Activated CD4-positive, alpha-beta T cell treated with anti-CD3 and anti-CD28 coated beads for 36 hours (primary cell): ENCODE measurements at regions of chr13 and their contacts with region 1.

Region 1: DNA sequence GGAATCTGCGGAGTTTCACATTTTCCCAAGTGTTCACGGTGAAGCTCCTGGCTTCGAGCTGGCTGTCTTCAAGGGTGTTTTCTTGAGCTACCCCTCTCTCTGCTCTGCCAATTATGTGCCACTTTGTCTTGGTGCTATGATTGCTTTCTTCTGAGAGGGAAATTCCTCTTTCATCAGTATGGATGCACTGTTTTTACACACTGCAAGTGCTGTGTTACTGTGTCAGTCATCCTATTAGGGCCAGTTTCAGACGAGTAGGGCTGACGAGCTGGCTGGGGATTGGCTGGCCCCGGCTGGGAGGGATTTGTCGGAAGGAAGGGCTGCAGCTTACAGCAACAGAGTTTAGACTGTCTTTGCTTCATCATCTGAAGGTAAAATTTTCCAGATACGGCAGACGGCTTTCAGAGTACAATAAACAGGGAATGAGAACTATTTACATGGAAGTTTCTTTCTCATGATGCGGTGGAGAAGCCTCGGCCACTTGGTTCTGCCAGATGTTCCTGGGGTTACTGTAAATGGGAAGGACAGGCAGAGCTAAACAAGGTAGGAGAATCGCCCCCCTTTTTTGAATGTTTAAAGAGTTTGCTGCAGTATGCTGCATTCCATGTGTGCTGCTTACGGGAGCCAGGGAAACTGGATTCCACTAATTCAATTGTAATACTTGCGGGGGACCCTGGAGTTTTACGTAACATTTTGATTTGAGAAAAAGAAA is at the start of gene MBNL2:
- DNase-seq: peak; percentile 93
- ATAC-seq: peak; percentile 98
- H3K4me3 Mint-ChIP-seq: peak within 1 kb of the TSS; percentile 80
- H3K27ac Mint-ChIP-seq: peak within 1 kb of the TSS; percentile 95
- H3K4me1 Mint-ChIP-seq: peaks cover 31% of the 10 kb centered on the region
- H3K27me3 Mint-ChIP-seq: no peaks in the 10 kb centered on the region
- total RNA-seq, gene MBNL2: 16.7 to 24.5 TPM

Region 2: GRCh38 chr13:97257800-97258799 is 36.0 kb after region 1 on chr13:
- CTCF ChIA-PET with region 1: interaction called, 3 read pairs
- POLR2A ChIA-PET with region 1: interaction called, 9 read pairs
- intact Hi-C with region 1: loop called (anchors 1 to 2 kb)
- DNase-seq: peak; percentile 27
- ATAC-seq: peak; percentile 45
- H3K4me3 Mint-ChIP-seq: peak overlapping the region; percentile 7
- H3K27ac Mint-ChIP-seq: peak overlapping the region; percentile 76
- H3K4me1 Mint-ChIP-seq: peaks cover 78% of the 10 kb centered on the region
- H3K27me3 Mint-ChIP-seq: no peaks in the 10 kb centered on the region

Region 3: GRCh38 chr13:97344265-97345175 is 122.4 kb after region 1 on chr13:
- CTCF ChIA-PET with region 1: interaction called, 7 read pairs
- POLR2A ChIA-PET with region 1: no interaction called
- intact Hi-C with region 1: loop called (anchors 1 to 5 kb)
- DNase-seq: peak; percentile 73
- ATAC-seq: peak; percentile 80
- H3K4me3 Mint-ChIP-seq: no peak overlapping the region
- H3K27ac Mint-ChIP-seq: no peak overlapping the region
- H3K4me1 Mint-ChIP-seq: peaks cover 8% of the 10 kb centered on the region
- H3K27me3 Mint-ChIP-seq: no peaks in the 10 kb centered on the region

Region 4: DNA sequence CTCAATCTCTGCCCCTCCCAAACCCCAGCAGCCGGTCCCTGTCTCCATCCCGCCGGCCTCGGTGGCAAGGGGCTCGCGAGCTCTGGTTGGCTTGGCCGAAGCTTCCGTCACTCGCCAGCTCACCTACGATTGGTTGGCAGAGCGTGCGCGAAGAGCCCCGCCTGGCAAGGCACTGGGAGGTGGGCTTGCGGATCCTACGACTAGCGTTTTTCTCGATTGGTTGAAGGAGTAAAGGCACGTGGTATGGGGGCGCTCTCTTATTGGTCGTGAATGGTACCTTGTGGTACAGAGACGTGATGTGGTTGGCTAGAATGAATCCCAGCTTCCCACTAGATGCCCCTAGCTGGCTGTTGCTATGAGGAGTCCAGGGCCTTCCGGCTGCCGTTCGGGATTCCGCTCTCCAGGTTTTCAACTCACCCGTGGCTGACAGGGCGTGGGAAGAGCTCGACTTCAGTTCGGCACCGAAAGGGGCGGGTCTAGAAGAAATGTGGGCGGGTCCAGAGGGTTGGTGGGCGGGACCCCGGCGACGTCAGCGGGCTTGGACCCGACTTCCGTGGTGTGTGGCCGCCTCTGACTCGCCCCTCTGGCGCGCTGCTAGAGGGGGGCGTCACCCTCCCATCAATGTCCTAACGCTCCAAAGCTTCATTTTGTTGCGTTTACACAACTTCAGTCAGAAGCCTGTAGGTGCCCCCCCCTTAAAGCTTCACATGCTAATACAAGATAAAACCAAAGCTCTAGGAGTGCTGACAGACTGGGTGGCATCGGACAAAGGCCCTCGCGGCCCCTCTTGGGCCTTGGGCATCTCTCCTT is 211.0 kb after region 1 on chr13:
- CTCF ChIA-PET with region 1: interaction called, 5 read pairs
- POLR2A ChIA-PET with region 1: interaction called, 3 read pairs
- intact Hi-C with region 1: loop called (anchors 1 kb)
- DNase-seq: peak; percentile 98
- ATAC-seq: peak; percentile 85
- H3K4me3 Mint-ChIP-seq: peak overlapping the region; percentile 94
- H3K27ac Mint-ChIP-seq: peak overlapping the region; percentile 99
- H3K4me1 Mint-ChIP-seq: peaks cover 25% of the 10 kb centered on the region
- H3K27me3 Mint-ChIP-seq: peaks cover 5% of the 10 kb centered on the region

Region 5: DNA sequence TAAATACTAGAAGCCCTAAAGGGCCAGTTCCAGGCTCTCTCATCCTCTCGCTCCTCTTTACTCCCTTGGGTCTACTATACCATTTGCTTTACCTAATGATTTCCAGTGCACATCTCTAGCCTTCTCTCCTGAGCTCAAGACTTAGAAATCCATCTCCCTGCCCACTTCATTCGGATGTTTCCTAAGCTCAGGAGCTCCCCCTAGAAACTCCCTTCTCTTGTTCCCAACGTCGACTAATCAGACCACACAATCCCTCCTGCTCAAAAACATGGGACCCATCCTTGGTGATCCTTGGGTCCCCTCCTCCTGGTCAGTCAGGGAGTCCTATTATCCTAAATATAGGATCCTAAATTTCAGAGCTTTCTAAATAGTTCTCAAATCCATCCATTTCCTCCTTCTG is 1375.9 kb after region 1 on chr13:
- CTCF ChIA-PET with region 1: no interaction called
- POLR2A ChIA-PET with region 1: interaction called, 11 read pairs
- intact Hi-C with region 1: no loop called
- DNase-seq: no peak
- ATAC-seq: no peak
- H3K4me3 Mint-ChIP-seq: no peak overlapping the region
- H3K27ac Mint-ChIP-seq: peak overlapping the region; percentile 20
- H3K4me1 Mint-ChIP-seq: peaks cover 16% of the 10 kb centered on the region
- H3K27me3 Mint-ChIP-seq: no peaks in the 10 kb centered on the region